ENCODE measurements at regions of chr1 and their contacts with region 1.

Region 1: DNA sequence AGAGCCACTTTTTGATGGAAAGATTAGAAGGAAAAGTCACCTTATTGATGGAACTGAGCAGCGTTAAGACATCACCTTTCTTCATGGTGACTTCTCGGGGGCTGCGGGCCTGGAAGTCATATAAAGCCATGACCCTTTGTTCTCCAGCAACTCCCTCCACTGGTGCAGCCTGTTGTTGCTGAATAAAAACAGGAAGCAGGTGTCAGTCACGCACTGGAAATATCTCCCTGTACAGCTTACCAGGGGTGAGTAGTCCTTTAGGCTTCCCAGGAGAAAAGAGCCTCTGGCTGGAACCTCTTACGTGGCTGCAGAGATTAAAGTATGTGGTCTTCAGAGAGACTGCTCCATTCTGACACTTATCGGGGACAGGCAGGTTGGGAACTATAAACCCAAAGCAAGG is 31.9 kb downstream of the SPTA1 start:
- DNase-seq: peak; percentile 76
- H3K4me3 ChIP-seq: peak overlapping the region; percentile 25
- H3K27ac ChIP-seq: no peak overlapping the region
- H3K4me1 ChIP-seq: peaks cover 28% of the 10 kb centered on the region
- CTCF ChIP-seq: 0 out of 2 replicates have a peak, but pooled peaks have one; percentile 39

Region 2: GRCh38 chr1:158506369-158506987 is 148.1 kb before region 1 on chr1:
- CTCF ChIA-PET with region 1: no interaction called
- POLR2A ChIA-PET with region 1: no interaction called
- intact Hi-C with region 1: loop called (anchors 5 kb)
- DNase-seq: peak; percentile 56
- H3K4me3 ChIP-seq: no peak overlapping the region
- H3K27ac ChIP-seq: no peak overlapping the region
- H3K4me1 ChIP-seq: no peaks in the 10 kb centered on the region
- CTCF ChIP-seq: peak; percentile 84

Measured in OCI-LY7 (cell line).